ENCODE measurements at regions of chr9 and their contacts with region 1.

Region 1: DNA sequence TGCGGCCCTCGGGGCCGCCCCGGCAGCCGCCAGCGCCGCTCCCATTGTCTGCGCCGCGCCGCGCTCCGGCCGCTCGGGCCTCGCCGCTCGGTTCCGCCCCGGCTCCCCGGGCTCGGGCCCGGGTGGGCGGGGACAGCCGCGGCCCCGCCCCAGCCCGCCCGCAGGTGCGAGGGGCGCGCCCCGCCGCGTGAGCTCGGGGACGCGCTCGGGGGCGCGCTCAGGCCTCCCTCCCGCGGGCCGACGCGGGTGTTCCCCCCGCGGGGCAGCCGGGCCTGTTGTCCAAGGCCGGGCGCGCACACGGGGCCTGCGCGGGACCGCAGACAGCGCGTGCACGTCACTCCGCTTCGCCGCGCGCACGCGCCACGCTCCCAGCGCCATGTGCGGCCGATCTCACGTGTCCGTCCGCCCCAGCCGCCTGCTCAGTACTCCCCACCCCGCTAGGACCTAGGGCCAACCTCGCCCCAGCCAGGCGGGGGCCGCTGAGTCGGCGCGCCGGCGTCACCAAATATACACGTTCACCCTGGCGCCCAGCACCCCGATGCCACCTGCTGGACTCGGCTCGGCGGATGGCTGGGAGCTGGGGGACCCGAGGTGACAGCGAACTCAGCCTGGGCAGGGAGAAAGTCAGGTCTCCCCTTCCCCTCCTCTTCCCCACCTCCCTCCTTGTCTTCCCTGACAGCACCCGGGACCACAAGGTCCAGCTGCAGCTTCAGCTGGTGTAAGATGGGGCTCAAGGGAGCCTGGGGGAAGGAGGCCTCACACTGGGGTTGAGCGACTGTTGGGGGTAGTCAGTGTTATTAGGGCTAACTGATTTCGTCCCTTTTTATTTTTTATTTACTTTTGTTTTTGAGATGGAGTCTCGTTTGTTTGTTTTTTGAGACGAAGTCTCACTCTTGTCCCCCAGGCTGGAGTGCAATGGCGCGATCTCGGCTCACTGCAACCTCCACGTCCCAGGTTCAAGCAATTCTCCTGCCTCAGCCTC is 14.3 kb downstream of the GBGT1 start:
- DNase-seq: peak; percentile 73 to 90
- H3K4me3 ChIP-seq: peak overlapping the region; percentile 73 to 82 (median 76)
- H3K27ac ChIP-seq: no peak overlapping the region; the same call in 1 of the 2 replicates
- H3K4me1 ChIP-seq: peaks cover 0 to 15% (median 11%) of the 10 kb centered on the region in 4 experiments; a peak in 5 of 7 replicates
- H3K27me3 ChIP-seq: peaks cover 0 to 11% (median 0%) of the 10 kb centered on the region in 4 experiments; a peak in 2 of 7 replicates
- CTCF ChIP-seq: peak in 2 of 3 experiments; percentile 1 to 14; a peak in 1 of 4 replicates
- EP300 ChIP-seq: no peak
- POLR2A ChIP-seq: no peak; a peak in 2 of 3 replicates
- RAD21 ChIP-seq: 0 out of 4 replicates have a peak, but pooled peaks of 1 of the 2 experiments have one; percentile 6

Region 2: DNA sequence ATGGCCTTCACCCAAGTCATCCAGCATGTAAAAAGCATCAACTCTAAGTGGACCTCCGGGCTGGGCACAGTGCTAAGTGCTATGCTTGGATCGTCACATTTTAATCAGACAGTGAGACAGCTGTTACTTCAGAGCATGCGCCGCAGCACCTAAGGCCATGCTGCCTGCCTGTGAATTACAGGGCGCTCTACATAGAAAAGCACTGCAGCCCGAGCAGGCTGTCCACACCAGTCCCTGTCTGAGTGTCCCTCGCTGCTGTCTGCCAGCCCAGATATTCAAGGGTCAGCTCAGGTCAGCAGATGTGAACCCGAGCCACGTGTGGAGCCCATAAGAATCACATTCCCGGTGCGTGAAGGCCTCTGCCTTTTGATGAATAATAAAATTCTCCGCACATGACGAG is 308.4 kb before region 1 on chr9:
- CTCF ChIA-PET with region 1: no interaction called
- POLR2A ChIA-PET with region 1: no interaction called
- DNase-seq: no peak
- H3K4me3 ChIP-seq: no peak overlapping the region
- H3K27ac ChIP-seq: no peak overlapping the region
- H3K4me1 ChIP-seq: no peaks in the 10 kb centered on the region
- H3K27me3 ChIP-seq: no peaks in the 10 kb centered on the region
- CTCF ChIP-seq: no peak
- EP300 ChIP-seq: no peak
- POLR2A ChIP-seq: no peak
- RAD21 ChIP-seq: no peak

Region 3: DNA sequence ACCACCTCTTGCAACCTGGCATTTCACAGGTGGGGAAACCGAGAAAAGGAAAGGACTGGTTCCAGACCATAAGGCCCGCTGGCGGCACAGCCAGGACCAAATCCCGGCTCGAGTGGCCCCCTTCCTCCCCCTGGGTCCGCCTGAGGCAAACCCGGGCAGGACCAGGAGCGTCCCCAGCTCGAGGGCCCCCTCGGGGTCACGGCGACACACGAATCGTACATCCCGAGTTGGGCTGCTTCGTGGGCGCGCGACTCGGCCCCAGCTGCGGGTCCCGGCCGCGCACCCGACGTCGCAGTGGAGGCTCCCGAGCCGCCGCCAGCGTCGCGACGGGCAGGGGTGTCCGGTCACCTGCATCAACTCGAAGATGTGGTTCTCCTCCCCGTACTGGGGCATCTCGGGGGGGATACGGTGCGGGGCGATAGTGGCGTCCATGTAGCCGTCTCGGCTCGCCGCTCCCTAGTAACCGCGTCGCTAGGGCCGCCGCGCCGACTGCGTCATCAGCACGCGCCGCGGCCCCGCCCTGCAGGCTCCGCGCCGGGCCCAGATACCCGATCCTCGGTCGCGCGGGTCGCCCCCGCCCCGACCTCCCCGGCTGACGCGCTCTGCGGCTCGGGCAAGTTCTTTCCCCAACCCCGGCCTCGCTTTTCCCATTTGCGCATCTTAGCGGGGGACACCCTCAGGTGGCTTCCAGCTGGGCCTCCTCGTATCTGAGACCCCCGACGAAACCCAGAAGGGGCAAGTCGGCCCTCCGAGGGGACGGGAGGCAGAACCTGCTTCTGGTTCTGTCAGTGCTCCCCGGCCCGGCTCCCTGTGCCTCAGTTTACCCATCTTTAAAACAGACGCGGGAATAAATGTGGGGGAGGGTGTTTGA is 271.4 kb before region 1 on chr9 and contains the start of gene AK8:
- CTCF ChIA-PET with region 1: no interaction called
- POLR2A ChIA-PET with region 1: no interaction called
- DNase-seq: peak in 1 of 2 experiments; percentile 90
- H3K4me3 ChIP-seq: peak within 1 kb of the TSS; percentile 69 to 97 (median 88)
- H3K27ac ChIP-seq: no peak within 1 kb of the TSS
- H3K4me1 ChIP-seq: peaks cover 0 to 6% (median 0%) of the 10 kb centered on the region in 4 experiments; a peak in 1 of 7 replicates
- H3K27me3 ChIP-seq: peaks cover 0 to 14% (median 9%) of the 10 kb centered on the region in 4 experiments; a peak in 6 of 7 replicates
- CTCF ChIP-seq: no peak
- EP300 ChIP-seq: 0 out of 3 replicates have a peak, but pooled peaks of 1 of the 2 experiments have one; percentile 17
- POLR2A ChIP-seq: no peak
- RAD21 ChIP-seq: no peak; a peak in 1 of 4 replicates
- total RNA-seq, gene AK8: 0.48 and 0.52 TPM in 2 replicates

Region 4: DNA sequence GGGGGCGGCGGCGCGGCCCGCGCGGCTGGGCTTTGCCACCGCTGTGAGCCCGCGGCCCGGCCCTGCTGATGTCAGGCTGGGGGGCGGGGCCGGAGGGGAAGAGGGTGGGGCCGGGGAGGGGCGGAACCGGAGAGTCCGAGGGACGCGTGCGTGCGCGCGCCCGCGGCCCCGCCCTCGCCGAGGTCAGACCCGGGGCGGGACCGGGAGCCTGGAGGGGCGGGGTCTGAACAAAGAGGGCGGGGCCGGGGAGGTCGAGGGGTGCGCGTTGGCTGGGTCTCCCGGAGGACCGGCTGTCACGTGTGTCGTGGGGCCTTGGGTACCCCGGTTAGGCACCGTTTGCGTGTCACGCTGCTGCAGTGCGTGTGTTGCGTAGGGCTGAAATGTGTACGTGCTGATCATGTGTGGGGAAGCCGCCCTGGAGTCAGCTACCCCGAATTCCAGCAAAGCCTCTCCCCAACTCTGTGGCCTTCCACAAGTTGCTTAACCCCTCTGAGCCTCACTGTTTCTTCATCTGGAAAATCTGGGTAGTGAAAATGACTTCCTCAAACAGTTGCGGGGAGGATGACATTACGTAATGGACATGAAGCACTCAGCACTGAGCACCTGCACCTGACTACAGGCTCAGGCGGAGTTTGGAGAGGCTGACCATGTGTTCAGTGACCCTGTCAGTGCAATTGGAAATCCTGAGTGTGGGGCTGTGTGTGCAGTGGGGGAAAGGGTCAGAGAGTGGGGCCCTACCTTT is 28.0 kb before region 1 on chr9 and contains the start of gene RALGDS:
- CTCF ChIA-PET with region 1: interaction called, 337 read pairs
- POLR2A ChIA-PET with region 1: interaction called, 13 read pairs
- DNase-seq: peak; percentile 38 to 94
- H3K4me3 ChIP-seq: peak within 1 kb of the TSS; percentile 51 to 79 (median 56)
- H3K27ac ChIP-seq: no peak within 1 kb of the TSS
- H3K4me1 ChIP-seq: peaks cover 0 to 17% (median 6%) of the 10 kb centered on the region in 4 experiments; a peak in 6 of 7 replicates
- H3K27me3 ChIP-seq: peaks cover 0 to 48% (median 33%) of the 10 kb centered on the region in 4 experiments; a peak in 5 of 7 replicates
- CTCF ChIP-seq: no peak
- EP300 ChIP-seq: no peak
- POLR2A ChIP-seq: no peak
- RAD21 ChIP-seq: no peak
- total RNA-seq, gene RALGDS: 11.2 and 14.5 TPM in 2 replicates